Mammary epithelial cell (primary cell): ENCODE measurements at regions of chr15 and their contacts with region 1.

Region 1: GRCh38 chr15:91271565-91272153 is 171.6 kb downstream of the SV2B start:
- DNase-seq: peak; percentile 42
- H3K4me3 ChIP-seq: no peak overlapping the region
- H3K27ac ChIP-seq: no peak overlapping the region
- H3K4me1 ChIP-seq: no peaks in the 10 kb centered on the region
- H3K27me3 ChIP-seq: no peaks in the 10 kb centered on the region
- CTCF ChIP-seq: peak; percentile 52 to 81

Region 2: GRCh38 chr15:90956594-90957030 is 315.0 kb before region 1 on chr15:
- CTCF ChIA-PET with region 1: no interaction called
- dilution Hi-C with region 1: no loop called
- in situ Hi-C with region 1: no loop called
- intact Hi-C with region 1: loop called (anchors 2 kb)
- DNase-seq: peak; percentile 41
- H3K4me3 ChIP-seq: peak overlapping the region; percentile 45 to 60 (median 46)
- H3K27ac ChIP-seq: no peak overlapping the region
- H3K4me1 ChIP-seq: peaks cover 19% of the 10 kb centered on the region
- H3K27me3 ChIP-seq: no peaks in the 10 kb centered on the region
- CTCF ChIP-seq: peak; percentile 73 to 95

Region 3: DNA sequence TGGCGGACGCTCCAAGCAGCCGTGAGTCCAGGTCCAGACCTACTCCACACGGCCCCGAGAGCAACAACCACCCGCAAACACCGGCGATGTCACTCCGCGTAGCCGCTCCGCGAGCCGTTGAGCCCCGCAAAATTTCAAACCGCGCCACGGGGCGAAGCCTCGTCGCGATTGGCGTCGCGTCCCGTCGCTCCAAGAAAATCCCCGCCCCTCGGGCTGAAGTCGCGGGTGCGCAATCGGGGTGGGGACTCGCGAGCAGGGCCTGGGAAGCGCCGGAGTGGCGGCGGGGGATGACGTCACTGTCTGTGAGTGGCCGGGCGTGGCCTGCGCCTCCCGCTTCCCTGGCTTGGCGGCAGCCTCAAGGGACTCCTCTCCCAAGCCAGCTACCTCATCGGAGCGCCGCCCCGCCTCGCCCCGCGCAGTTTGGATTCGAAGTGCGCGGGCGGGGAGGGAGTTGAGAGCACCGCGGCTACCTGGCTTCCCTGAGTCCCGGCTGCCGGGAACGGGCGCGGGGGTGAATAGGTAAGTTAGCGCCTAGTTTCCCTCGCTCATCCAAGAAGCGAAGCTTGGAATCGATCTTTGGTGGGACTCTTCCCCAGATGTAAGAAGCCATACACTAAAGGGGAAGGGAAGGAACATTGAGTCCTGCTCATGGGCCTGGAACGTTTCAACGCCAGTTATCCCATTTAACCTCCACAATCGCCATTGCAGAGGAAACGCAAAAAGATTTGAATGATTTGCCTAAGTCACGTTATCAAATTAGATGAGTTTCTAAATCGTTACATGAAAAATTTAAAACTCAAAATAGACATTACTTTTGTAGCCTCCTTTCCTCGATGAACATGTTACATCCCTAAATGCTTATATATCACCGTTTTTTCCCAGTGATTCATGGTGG is 277.0 kb before region 1 on chr15 and contains the start of gene PRC1:
- CTCF ChIA-PET with region 1: interaction called, 10 read pairs
- dilution Hi-C with region 1: no loop called
- in situ Hi-C with region 1: no loop called
- intact Hi-C with region 1: no loop called
- DNase-seq: peak; percentile 99
- H3K4me3 ChIP-seq: peak within 1 kb of the TSS; percentile 83 to 100 (median 96)
- H3K27ac ChIP-seq: peak within 1 kb of the TSS; percentile 94
- H3K4me1 ChIP-seq: peaks cover 8% of the 10 kb centered on the region
- H3K27me3 ChIP-seq: no peaks in the 10 kb centered on the region
- CTCF ChIP-seq: no peak
- total RNA-seq, gene PRC1: 4.5 to 100 TPM

Region 4: DNA sequence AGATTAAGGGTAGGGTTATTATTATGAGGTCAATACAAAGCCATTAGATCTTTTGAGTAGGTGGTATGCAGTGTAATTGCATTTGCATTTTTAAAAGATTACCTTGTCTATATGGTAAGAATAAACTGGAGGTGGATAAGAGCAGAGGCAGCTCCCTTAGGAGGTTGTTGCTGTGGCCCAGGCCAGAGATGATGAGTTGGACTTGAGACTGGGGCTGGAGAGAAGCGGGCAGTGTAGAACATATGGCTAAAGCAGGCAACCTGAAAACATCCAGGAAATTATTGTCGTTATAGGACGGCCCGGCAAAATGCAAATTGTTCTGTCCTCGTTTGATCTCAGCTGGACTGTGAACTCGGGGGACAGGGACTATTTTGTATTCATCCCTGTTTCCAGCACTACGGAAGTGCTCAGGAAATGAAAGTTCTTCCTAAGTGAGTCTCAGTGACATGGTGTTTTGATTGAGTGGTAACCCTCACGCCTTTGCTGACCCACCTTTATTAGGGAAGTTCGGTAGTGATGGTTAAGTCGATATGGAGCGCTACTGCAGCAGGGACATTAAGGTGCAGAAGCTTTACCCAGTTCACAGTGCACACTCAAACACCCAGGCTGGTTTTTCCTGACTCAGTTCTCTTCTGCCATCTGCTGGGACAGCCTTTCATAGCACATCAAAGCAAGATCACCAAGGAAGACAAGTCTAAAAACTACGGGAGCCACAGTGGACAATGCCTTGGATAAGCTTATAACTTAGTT is 222.1 kb before region 1 on chr15:
- CTCF ChIA-PET with region 1: no interaction called
- dilution Hi-C with region 1: loop called (anchors 25 kb)
- in situ Hi-C with region 1: no loop called
- intact Hi-C with region 1: no loop called
- DNase-seq: peak; percentile 58
- H3K4me3 ChIP-seq: no peak overlapping the region
- H3K27ac ChIP-seq: no peak overlapping the region
- H3K4me1 ChIP-seq: no peaks in the 10 kb centered on the region
- H3K27me3 ChIP-seq: peaks cover 2% of the 10 kb centered on the region
- CTCF ChIP-seq: peak; percentile 52 to 76

Region 5: DNA sequence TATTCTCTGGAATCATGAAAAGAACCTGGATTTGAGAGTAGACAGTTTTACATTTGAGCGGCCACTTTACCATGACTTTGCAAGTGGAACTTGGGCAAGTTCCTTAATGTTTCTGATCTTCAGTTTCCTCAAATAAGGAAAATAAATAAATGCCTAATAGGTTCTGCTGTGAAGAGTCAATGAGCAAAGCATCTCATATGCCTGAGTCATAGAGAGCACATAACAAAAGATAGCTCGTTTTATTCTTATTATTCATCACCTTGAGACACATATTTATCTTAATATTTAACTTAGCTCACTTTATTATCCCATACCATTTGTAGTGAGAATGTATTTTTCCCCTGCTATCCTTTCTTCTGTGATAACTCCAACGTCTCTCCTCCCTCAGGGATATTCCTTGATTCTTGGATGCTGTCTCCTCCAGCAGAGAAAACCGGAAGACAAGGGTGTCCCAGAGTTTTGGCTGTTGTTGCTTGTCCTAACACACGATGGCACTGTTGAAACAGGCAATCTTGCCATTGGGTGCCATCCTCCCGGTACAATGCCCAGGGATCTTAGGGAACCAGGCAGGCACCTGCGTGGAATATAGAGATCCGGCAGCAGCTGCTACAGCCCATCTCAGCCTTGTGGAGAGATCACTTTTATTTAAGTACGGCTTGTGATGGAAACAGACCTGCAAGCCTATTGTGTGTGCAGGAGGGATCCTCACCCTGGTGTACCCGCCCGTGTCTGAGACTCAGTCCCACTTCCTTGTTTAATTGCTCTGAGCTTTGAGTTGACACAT is 215.9 kb before region 1 on chr15:
- CTCF ChIA-PET with region 1: interaction called, 5 read pairs
- dilution Hi-C with region 1: loop called (anchors 25 kb)
- in situ Hi-C with region 1: loop called in 1 of 2 experiments (anchors 5 kb)
- intact Hi-C with region 1: loop called (anchors 1 kb)
- DNase-seq: peak; percentile 67
- H3K4me3 ChIP-seq: no peak overlapping the region
- H3K27ac ChIP-seq: no peak overlapping the region
- H3K4me1 ChIP-seq: no peaks in the 10 kb centered on the region
- H3K27me3 ChIP-seq: peaks cover 5% of the 10 kb centered on the region
- CTCF ChIP-seq: peak; percentile 89 to 90

Region 6: DNA sequence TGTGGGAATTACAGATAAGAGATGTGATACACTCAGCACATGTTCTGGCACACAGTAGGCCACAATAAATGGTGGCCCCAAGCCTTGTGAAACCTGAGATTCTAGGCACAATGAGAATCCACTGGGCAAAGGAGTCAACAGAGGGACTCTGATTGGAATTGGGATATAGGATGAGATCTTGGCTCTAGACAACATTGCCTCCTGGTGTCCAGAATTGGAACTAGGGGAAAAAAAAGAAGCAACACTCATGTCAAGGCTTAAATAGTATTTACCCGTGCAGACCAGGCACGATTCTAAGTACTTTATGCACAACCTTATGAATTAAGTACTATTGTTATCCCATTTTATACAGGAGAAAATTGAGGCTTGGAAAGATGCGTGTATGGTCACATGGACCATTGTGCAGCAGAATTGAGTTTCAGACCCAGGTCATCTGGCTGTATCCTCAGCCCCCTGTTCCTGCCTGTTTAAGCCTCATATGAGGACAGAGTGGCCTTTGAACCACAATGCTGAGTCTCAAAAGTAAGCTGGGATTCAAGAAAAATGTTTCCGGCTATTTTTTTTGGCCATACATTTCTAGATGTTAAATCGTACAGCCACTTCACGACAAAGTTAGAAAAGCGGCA is 46.8 kb before region 1 on chr15:
- CTCF ChIA-PET with region 1: no interaction called
- dilution Hi-C with region 1: no loop called
- in situ Hi-C with region 1: no loop called
- intact Hi-C with region 1: loop called (anchors 1 kb)
- DNase-seq: peak; percentile 37
- H3K4me3 ChIP-seq: no peak overlapping the region
- H3K27ac ChIP-seq: no peak overlapping the region
- H3K4me1 ChIP-seq: no peaks in the 10 kb centered on the region
- H3K27me3 ChIP-seq: peaks cover 3% of the 10 kb centered on the region
- CTCF ChIP-seq: peak; percentile 63 to 85